Right cardiac atrium (tissue), 5 donors: ENCODE measurements at regions of chr1 and their contacts with region 1.

Region 1: DNA sequence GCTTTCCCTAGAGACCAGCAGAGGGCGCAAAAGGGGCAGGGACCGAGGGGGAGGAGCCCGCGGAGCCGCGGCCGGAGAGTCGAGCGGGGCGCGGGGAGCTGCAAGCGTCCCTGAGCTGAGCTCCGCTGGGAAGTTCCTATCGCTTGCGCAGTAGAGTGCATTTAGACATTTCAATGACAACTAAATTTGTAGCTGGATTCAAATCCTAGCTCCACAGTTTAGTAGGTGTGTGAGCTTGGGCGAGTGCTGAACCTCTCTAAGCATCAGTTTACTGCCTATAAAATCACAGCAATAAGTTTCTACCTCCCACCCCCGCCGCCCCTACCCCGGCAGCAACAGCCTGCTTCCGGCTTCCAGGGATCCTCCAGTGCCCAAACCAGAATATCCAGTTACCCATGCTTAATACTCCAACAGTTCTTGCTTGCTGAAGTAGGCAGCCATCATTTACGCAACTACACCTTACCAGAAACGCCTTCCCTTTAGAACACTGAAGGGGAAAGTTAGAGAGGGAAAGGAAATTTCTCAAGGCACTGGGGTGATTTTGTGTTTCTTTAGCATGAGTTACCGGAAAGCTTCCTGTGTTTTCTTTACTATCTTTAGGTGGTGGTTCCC is 9.1 kb downstream of the TLR5 start:
- DNase-seq: peak; percentile 87 to 95 (median 94)
- ATAC-seq: peak; percentile 90 to 92
- H3K4me3 ChIP-seq: peak overlapping the region; percentile 55
- H3K27ac ChIP-seq: no peak overlapping the region
- H3K4me1 ChIP-seq: peaks cover 5% of the 10 kb centered on the region
- H3K27me3 ChIP-seq: no peaks in the 10 kb centered on the region

Region 2: DNA sequence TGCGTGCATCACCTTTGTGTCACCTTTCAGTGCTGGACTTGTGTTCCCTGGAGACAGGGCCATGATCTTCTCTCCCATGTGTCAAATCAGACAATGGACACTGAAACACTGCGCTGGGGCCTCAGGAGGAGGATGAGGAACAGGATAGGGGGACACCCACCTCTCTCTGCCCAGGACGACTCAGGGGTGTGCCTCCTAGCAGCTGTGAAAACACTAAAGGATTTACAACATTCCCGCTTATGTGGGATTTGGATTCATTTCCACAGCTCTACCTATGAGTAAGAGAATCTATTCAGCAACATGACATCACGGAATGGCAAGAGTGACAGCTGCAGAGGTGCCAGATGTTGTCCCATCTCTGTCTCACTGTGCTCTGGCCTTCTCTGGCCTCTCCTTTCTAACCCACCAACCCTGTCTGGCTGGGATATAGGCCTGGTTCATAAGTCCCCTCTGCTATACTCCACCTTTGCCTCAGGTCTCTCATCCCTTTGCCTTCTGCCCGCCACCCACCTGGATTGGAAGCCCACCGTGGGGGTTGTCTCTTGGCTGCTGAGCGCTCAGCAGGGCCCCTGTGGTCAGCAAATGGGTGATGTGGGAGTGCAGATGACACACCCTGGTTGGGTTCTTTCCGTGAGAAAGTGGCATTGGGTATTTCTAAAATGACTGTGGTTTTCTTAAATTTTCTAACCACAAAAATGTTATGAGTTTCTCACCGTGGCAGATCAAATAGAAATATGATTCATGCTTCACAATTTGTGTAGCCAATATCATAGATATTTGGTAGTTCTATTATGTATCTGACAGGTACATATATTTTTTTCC is 56.2 kb after region 1 on chr1:
- intact Hi-C with region 1: loop called in 1 of 4 experiments (anchors 10 kb)
- DNase-seq: no peak
- ATAC-seq: no peak
- H3K4me3 ChIP-seq: no peak overlapping the region
- H3K27ac ChIP-seq: no peak overlapping the region
- H3K4me1 ChIP-seq: no peaks in the 10 kb centered on the region
- H3K27me3 ChIP-seq: no peaks in the 10 kb centered on the region

Region 3: GRCh38 chr1:223244366-223245103 is 110.6 kb after region 1 on chr1:
- intact Hi-C with region 1: loop called in 2 of 4 experiments (anchors 10 kb)
- DNase-seq: no peak
- ATAC-seq: peak in 1 of 2 donors; percentile 37
- H3K4me3 ChIP-seq: no peak overlapping the region
- H3K27ac ChIP-seq: no peak overlapping the region
- H3K4me1 ChIP-seq: no peaks in the 10 kb centered on the region
- H3K27me3 ChIP-seq: no peaks in the 10 kb centered on the region

Region 4: DNA sequence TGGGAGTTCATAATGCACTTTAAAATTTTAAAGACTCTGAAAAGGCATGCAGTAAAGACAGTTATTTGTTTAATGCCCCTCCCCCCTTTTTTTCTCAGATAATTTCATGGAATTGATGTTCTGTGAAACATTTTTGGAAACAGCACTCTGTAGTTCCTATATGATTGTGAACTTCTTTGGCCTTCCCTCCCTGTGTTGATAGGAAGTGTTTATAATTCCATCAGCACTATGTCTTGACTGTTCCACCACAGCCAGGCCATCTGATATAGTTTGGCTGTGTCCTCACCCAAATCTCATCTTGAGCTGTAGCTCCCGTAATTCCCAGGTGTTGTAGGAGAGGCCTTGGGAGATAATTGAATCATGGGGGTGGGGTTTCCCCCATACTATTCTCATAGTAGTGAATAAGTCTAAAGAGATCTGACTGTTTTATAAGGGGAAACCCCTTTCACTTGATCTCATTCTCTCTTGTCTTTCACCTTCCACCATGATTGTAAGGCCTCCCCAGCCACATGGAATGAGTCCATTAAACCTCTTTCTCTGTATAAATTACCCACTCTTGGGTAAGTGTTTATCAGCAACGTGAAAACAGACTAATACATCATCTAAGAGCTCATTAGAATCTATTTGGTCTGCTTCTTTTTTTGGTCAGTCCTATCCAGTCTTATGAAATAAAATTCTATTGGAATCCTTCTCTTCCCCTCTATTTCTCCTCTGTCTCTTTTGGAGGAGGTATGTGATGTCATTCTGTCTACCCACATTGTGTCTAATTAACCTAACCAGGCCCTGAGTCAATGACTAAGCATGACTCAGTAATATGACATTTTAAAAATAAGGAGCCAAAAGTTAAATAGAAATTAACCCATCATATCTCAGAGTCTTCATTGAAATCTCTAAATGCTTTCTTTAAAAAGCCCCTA is 268.2 kb after region 1 on chr1:
- intact Hi-C with region 1: no loop called
- DNase-seq: no peak
- ATAC-seq: no peak
- H3K4me3 ChIP-seq: no peak overlapping the region
- H3K27ac ChIP-seq: no peak overlapping the region
- H3K4me1 ChIP-seq: no peaks in the 10 kb centered on the region
- H3K27me3 ChIP-seq: no peaks in the 10 kb centered on the region

Region 5: DNA sequence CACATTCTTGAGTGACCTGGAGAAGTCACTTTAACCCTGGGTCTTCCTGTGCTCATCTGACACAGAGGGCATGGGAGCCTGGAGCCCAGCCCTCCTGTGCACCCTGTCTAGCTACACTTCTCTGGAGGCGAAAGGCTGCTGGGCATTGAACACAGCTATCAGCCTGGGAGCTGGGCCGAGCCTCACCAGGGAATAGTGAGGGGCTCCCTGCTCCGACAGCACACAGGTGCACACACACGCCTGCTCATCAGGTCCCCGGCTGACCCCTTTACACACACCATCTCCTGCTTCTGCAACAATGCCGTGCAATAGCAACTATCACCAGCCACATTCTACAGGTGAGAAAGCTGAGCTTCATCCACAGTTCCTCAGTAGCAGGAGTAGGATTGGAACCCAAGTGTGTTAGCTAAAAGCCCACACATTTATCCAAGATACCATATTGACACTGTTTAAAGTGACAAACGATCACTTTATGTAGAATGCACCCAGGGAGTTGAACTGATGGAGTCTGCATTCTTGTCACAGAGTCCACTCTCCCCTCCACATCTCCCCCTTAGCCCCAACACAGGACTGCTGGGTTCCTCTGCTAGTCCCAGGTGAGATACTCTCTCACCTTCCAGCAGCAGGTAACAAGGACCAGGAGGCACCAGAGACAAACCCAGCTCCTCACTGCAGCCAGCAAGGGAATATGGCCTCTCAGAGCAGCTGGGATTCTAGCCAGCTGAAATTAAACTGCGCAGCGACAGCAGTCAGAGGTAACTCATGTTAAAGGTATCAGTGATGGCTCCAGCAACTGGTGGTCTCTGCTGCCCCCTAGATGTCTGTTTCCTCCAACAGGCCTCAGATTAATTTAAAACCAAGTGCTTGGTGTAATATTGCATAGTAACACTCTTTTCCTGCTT is 549.9 kb after region 1 on chr1:
- intact Hi-C with region 1: loop called in 2 of 4 experiments (anchors 2 to 5 kb)
- DNase-seq: peak; percentile 27 to 68 (median 50)
- ATAC-seq: peak; percentile 43 to 64
- H3K4me3 ChIP-seq: no peak overlapping the region
- H3K27ac ChIP-seq: no peak overlapping the region
- H3K4me1 ChIP-seq: no peaks in the 10 kb centered on the region
- H3K27me3 ChIP-seq: no peaks in the 10 kb centered on the region